ENCODE measurements at regions of chr4 and their contacts with region 1.

Region 1: GRCh38 chr4:168923526-168924194 is 86.4 kb downstream of the CBR4 start:
- DNase-seq: no peak
- H3K4me3 ChIP-seq: no peak overlapping the region
- H3K27ac ChIP-seq: no peak overlapping the region
- H3K4me1 ChIP-seq: no peaks in the 10 kb centered on the region
- H3K27me3 ChIP-seq: no peaks in the 10 kb centered on the region
- CTCF ChIP-seq: peak; percentile 50 to 69 (median 61)

Region 2: GRCh38 chr4:169485791-169486742 is 562.4 kb after region 1 on chr4:
- intact Hi-C with region 1: loop called (anchors 5 kb)
- DNase-seq: no peak
- H3K4me3 ChIP-seq: no peak overlapping the region
- H3K27ac ChIP-seq: no peak overlapping the region
- H3K4me1 ChIP-seq: no peaks in the 10 kb centered on the region
- H3K27me3 ChIP-seq: no peaks in the 10 kb centered on the region
- CTCF ChIP-seq: peak; percentile 33 to 60 (median 49)